ENCODE measurements at regions of chr6 and their contacts with region 1.

Region 1: DNA sequence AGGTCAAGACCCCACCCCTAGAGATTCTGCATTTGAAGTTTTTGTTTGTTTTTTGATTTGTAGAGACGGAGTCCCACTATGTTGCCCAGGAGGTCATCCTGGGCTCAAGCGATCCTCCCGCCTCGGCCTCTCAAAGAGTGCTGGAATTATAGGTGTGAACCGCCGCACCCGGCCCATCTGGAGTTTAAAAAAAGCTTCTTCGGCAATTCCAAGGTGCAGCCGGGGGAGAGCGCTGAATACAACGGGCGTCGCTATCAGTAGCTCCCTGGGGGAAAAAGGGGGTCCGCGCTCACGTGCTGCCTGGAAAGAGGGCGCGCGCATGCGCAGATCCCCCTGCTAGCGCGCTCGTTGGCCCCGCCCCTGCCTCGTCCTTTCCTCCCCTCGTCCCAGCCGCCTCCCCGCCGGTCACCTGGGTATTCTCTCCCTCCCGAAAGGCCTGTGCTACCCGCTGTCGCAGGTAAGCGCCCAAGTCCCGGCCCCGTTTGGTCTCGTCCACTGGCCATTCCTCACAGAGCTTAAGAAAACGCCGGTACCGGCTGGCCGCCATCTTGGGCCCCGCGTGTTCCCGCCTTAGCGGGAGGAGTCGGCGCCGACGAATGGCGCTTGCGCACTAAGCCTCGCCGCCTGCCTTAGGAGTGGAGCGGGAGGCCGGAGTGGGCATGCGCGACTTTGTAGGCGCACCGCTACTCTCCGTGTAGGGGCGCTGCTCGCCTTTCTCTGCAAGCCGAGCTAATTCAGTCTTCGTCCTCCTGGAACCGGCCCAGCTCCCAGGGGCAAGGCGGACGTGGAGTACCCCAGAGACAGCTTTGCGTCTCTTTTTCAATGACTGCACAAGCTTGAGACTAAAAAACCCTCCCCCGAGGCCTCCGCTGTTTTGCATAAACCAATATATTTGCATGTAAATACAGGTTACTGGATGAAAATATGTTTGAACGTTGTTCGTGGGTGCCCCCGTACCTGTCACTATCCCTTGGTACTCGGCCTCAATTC is at the start of gene UQCC2:
- DNase-seq: peak; percentile 95
- H3K4me3 Mint-ChIP-seq: peak within 1 kb of the TSS; percentile 95
- H3K27ac Mint-ChIP-seq: peak within 1 kb of the TSS; percentile 98
- H3K4me1 Mint-ChIP-seq: peaks cover 32% of the 10 kb centered on the region
- H3K27me3 Mint-ChIP-seq: peaks cover 4% of the 10 kb centered on the region
- total RNA-seq, gene UQCC2: 136 and 137 TPM in 2 replicates

Region 2: GRCh38 chr6:33788694-33789549 is 77.5 kb after region 1 on chr6 and contains the start of gene LEMD2:
- intact Hi-C with region 1: loop called (anchors 2 kb)
- DNase-seq: peak; percentile 91
- H3K4me3 Mint-ChIP-seq: peak within 1 kb of the TSS; percentile 92
- H3K27ac Mint-ChIP-seq: peak within 1 kb of the TSS; percentile 96
- H3K4me1 Mint-ChIP-seq: peaks cover 34% of the 10 kb centered on the region
- H3K27me3 Mint-ChIP-seq: peaks cover 7% of the 10 kb centered on the region
- total RNA-seq, gene LEMD2: 61.7 and 66.2 TPM in 2 replicates

Region 3: DNA sequence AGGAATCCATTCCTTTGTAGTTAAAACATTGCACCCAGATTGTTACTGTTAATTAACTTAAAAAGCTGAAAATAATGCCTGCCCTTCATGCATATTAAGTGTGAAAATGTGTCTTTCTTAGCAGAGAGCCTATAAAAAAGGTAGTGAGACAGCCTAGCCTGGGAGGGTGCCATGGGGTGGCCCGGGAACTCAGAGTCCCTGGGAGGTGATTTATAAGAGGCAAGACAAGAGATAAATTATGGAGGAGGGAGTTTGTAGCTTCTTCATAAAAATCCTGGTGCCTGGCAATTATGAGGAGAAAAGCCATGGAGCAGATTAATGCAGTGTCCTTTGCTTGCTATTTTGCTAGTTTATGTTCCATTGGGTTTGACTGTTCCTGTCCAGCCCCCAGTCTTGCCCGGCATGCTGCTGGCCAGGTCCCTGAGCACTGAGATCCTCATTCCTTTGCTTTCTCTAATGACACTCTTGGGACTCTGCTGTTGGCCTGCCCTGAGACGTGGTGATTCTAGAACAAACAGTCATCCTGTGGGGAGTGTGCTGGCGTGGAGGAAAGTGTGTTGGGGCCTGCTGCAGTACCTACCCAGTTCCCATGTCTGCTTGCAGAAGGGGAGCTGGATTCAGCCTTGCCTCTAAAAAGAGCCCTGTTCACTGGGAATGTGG is 88.1 kb after region 1 on chr6:
- intact Hi-C with region 1: no loop called
- DNase-seq: no peak
- H3K4me3 Mint-ChIP-seq: no peak overlapping the region
- H3K27ac Mint-ChIP-seq: no peak overlapping the region
- H3K4me1 Mint-ChIP-seq: no peaks in the 10 kb centered on the region
- H3K27me3 Mint-ChIP-seq: peaks cover 14% of the 10 kb centered on the region

Measured in activated T-helper 2 cell treated with anti-CD3 and anti-CD28 coated beads, Interferon-gamma antibody, Interleukin-2, Interleukin-4, amounts not matched to agents 10 μg/mL and 5 μg/mL and 100 μg/mL, durations not matched to agents 14 hours and 24 hours and 36 hours (primary cell).